Activated CD4-positive, alpha-beta memory T cell treated with anti-CD3 and anti-CD28 coated beads for 36 hours (primary cell): ENCODE measurements at regions of chrX and their contacts with region 1.

Region 1: DNA sequence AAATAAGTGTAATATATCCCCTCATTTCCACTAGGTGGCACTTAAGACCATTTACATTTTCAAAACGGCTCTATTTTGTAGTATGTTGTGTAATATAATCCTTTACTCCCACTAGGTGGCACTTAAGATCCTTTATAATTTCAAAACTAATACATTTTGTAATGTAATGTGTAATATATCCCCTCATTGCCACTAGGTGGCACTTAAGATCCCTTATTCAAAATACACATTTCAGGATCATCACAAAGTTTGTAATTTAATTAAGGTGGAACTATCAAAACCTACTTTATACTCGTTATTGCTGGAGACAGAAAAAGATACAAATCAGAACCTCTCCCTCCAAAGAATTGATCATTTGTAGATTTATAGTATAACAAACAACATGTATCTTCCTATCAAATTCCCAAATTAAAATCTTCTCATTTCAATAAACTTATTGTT is 132.5 kb downstream of the ARHGAP6 start:
- DNase-seq: no peak
- H3K4me3 Mint-ChIP-seq: no peak overlapping the region
- H3K27ac Mint-ChIP-seq: no peak overlapping the region
- H3K4me1 Mint-ChIP-seq: no peaks in the 10 kb centered on the region
- H3K27me3 Mint-ChIP-seq: no peaks in the 10 kb centered on the region

Region 2: GRCh38 chrX:11412715-11413623 is 120.3 kb before region 1 on chrX:
- CTCF ChIA-PET with region 1: no interaction called
- POLR2A ChIA-PET with region 1: no interaction called
- intact Hi-C with region 1: no loop called
- DNase-seq: no peak
- H3K4me3 Mint-ChIP-seq: no peak overlapping the region
- H3K27ac Mint-ChIP-seq: no peak overlapping the region
- H3K4me1 Mint-ChIP-seq: no peaks in the 10 kb centered on the region
- H3K27me3 Mint-ChIP-seq: peaks cover 1% of the 10 kb centered on the region

Region 3: DNA sequence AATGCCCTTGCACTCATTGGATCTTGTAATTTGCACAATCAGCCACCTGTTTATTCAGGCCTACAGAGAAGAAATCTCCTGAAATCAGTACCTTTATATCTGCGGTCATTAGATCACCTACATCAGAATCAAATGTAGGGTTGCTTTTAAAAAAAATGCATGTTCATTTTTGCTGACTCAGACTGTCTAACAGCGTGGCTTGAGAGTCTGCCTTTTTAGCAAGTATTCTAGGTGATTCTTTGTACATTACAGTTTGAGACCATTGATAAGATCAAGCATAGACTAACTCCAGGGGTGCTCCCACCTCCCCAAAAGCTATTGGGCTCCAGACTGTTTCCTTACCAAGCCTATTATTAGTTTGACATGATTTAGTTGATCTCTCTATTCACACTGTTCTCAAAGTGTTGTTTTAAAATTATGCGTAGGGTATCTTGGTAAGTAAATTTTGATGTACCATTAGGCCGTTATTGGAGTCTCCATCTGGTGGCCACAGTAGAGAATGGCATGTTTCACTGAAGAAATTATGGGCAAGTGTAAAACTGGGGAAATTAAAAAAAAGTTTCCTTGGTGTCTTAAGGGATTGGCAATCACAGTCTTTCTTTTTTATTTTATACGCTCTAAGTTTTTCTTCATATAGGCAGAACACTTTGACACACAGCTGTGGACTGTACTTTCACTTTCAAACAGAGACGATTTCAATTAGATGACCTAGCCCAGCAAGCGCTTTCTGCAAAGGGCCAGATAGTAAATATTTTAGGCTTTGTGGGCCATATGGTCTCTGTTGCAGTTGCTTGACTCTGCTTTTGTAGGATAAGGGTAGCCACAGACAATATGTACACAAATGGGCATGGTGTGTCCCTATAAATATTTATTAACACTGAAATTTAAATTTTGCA is 191.1 kb after region 1 on chrX:
- CTCF ChIA-PET with region 1: interaction called, 5 read pairs
- POLR2A ChIA-PET with region 1: no interaction called
- intact Hi-C with region 1: loop called (anchors 1 kb)
- DNase-seq: peak; percentile 10
- H3K4me3 Mint-ChIP-seq: no peak overlapping the region
- H3K27ac Mint-ChIP-seq: no peak overlapping the region
- H3K4me1 Mint-ChIP-seq: no peaks in the 10 kb centered on the region
- H3K27me3 Mint-ChIP-seq: no peaks in the 10 kb centered on the region

Region 4: DNA sequence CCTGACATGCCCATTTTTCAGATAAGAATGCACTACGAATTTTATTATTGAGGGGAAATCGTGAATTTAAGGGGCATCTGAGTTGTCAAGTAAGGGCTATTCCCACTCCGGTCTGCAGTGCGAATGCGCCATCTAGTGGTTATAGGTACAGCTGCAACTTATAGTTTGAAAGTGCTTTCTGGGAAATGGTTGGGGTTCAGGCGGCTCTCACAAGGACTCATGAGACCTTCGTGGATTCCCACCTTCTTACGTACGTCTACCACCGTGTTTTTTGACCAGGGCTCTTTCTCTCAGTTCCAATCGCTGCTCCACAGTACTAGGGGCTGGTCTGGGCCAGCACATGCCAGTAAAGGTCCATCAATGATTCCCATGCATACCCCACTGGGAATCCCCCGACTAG is 237.1 kb after region 1 on chrX:
- CTCF ChIA-PET with region 1: interaction called, 7 read pairs
- POLR2A ChIA-PET with region 1: no interaction called
- intact Hi-C with region 1: loop called (anchors 1 kb)
- DNase-seq: peak; percentile 62
- H3K4me3 Mint-ChIP-seq: no peak overlapping the region
- H3K27ac Mint-ChIP-seq: peak overlapping the region; percentile 87
- H3K4me1 Mint-ChIP-seq: peaks cover 35% of the 10 kb centered on the region
- H3K27me3 Mint-ChIP-seq: no peaks in the 10 kb centered on the region

Region 5: DNA sequence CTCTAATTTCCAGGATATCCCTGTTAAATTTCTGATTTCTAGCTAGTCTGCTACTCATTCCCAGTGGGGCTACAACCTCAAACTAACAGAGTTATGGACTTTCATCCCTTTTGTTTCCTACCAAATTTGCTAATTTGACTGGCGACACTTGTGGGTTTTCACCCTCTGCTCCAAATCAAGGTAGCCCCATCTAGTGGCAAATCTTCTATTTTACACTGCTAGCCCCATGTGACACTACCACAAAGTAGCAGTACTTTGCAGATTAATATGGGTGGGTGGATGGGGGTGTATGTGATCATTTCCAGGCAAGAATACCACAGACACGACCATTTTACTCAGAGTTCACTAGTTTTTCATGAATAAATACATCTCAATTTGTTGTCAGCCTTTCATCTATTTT is 375.1 kb after region 1 on chrX:
- CTCF ChIA-PET with region 1: no interaction called
- POLR2A ChIA-PET with region 1: no interaction called
- intact Hi-C with region 1: loop called (anchors 1 kb)
- DNase-seq: peak; percentile 15
- H3K4me3 Mint-ChIP-seq: no peak overlapping the region
- H3K27ac Mint-ChIP-seq: no peak overlapping the region
- H3K4me1 Mint-ChIP-seq: no peaks in the 10 kb centered on the region
- H3K27me3 Mint-ChIP-seq: peaks cover 2% of the 10 kb centered on the region